Psoas muscle (tissue), 8 donors: ENCODE measurements at regions of chr5 and their contacts with region 1.

Region 1: GRCh38 chr5:149381987-149382340 is 2.9 kb upstream of the IL17B start:
- DNase-seq: peak; percentile 77 to 89
- ATAC-seq: peak; percentile 85 to 91 (median 87)
- H3K4me3 ChIP-seq: peak overlapping the region; percentile 16
- H3K27ac ChIP-seq: peak overlapping the region; percentile 76
- H3K4me1 ChIP-seq: peaks cover 22% of the 10 kb centered on the region
- H3K27me3 ChIP-seq: no peaks in the 10 kb centered on the region
- CTCF ChIP-seq: peak; percentile 93

Region 2: DNA sequence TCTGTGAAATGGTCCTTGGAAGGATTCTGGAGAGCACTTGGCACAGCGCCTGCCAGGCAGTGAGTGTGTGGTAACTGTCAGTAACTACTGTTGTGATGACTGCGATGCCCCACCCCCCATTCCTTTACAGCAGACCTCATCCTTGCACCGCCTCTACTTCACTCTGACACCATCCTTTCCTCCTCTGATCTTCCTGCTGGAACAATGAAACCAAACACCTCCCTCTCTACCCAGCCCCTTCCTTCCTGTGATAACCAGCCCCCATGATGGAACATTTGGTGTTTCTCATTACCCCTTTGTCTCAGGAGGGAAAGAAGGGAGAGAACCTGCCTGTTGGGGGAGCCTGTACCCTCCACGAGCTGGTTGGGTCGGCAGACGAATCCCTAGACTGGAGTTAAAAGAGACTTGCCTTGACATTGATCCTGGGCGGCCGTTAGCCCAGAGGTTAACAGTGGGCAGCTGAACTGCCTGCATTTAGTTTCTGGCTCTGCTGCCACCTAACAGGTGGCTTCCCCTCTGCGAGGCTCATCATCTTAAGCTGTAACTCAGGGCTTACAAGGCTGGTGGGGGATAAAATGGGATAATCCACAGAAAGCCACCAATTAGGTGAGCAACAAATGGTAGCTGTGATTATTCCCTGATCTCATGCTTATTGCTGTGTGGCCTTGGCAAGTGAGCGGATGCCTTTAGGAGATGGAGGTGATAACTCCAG is 70.9 kb before region 1 on chr5:
- intact Hi-C with region 1: no loop called
- DNase-seq: peak; percentile 59 to 78
- ATAC-seq: peak in 2 of 4 donors; percentile 30 to 34
- H3K4me3 ChIP-seq: no peak overlapping the region
- H3K27ac ChIP-seq: peak overlapping the region; percentile 77
- H3K4me1 ChIP-seq: peaks cover 42% of the 10 kb centered on the region
- H3K27me3 ChIP-seq: no peaks in the 10 kb centered on the region
- CTCF ChIP-seq: no peak

Region 3: GRCh38 chr5:149434162-149435014 is 52.4 kb after region 1 on chr5:
- intact Hi-C with region 1: loop called (anchors 1 to 2 kb)
- DNase-seq: no peak
- ATAC-seq: peak; percentile 59 to 77 (median 66)
- H3K4me3 ChIP-seq: no peak overlapping the region
- H3K27ac ChIP-seq: no peak overlapping the region
- H3K4me1 ChIP-seq: peaks cover 8% of the 10 kb centered on the region
- H3K27me3 ChIP-seq: no peaks in the 10 kb centered on the region
- CTCF ChIP-seq: peak; percentile 86

Region 4: DNA sequence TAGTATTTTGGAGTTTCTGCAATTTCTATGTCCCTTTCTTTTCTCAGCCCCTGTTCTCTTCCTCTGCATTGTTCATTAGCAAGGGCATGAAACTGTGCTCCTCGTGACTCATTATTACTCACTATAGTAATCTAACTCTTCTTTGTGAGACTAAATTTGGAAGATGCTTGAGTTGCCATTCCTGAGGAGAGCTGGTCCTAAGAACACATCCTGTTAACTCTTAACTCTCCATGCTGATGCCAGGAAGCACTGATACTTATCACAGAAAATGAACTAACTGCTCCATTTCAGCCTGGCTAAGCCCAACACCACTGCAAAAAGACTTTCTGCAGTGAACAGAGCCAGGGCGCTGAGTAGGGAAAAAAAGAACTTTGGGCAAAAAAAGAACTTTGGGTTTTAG is 179.9 kb after region 1 on chr5:
- intact Hi-C with region 1: loop called (anchors 2 to 5 kb)
- DNase-seq: no peak
- ATAC-seq: peak; percentile 92 to 96 (median 94)
- H3K4me3 ChIP-seq: peak overlapping the region; percentile 30
- H3K27ac ChIP-seq: peak overlapping the region; percentile 83
- H3K4me1 ChIP-seq: peaks cover 31% of the 10 kb centered on the region
- H3K27me3 ChIP-seq: no peaks in the 10 kb centered on the region
- CTCF ChIP-seq: no peak

Region 5: DNA sequence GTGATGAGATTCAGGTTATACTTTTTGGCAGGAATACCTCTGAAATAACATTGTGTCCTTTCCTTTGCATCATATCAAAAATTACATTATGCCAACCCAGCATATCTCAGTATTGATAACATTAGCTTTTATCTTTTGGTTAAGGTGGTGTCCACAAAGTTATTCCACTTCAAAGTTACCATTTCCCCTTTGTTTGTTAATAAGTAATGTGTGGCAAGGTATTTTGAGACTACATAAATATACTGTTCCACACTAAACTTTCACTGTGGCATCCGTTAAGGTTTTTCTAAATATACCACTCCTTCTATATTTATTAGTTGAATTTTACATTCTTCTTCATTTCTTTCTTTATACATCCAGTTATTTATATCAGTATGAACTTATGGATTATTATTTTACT is 185.3 kb after region 1 on chr5:
- intact Hi-C with region 1: loop called (anchors 2 to 5 kb)
- DNase-seq: no peak
- ATAC-seq: no peak
- H3K4me3 ChIP-seq: no peak overlapping the region
- H3K27ac ChIP-seq: no peak overlapping the region
- H3K4me1 ChIP-seq: peaks cover 17% of the 10 kb centered on the region
- H3K27me3 ChIP-seq: no peaks in the 10 kb centered on the region
- CTCF ChIP-seq: no peak